ENCODE measurements at regions of chr1 and their contacts with region 1.

Region 1: DNA sequence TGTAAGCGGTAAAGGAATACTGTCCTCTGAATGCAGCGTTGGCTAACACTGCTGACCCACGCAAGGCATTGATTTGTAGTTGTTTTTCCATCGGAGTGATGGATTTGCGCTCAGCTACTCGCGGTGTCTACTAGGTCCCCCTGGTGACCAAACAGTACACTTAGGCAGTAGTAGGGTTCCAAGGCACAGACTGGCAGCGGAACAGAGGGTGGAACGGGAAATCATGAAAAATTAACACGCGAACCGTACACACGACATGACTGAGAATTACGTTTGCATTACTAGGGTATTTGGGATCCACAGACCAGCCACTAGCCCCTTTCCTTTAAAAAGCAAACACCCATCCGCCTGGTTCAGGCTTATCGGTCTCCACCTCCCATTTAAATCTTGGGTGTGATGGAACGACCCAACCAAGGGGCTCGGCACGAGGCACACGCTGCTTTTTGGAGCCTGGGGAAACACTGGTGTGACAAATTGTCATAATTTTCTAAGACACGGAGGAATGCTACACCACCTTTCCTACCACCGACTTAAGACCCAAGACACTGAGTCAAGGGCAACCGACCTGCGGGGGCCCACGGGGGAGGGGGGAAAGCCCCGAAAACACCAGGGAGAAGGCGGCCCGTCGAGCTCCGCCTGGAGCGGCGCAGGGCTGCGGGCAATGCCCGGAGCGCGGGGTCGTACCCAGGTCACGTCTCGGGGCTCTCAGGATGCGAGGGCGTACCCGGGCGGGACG is 699 bp downstream of the DIPK1A start:
- DNase-seq: peak; percentile 79
- ATAC-seq: peak; percentile 77
- H3K4me3 ChIP-seq: peak overlapping the region; percentile 85
- H3K27ac ChIP-seq: no peak overlapping the region
- H3K4me1 ChIP-seq: peaks cover 10% of the 10 kb centered on the region
- H3K27me3 ChIP-seq: no peaks in the 10 kb centered on the region
- CTCF ChIP-seq: peak; percentile 87

Region 2: GRCh38 chr1:92916902-92917301 is 43.7 kb before region 1 on chr1:
- CTCF ChIA-PET with region 1: no interaction called
- POLR2A ChIA-PET with region 1: no interaction called
- intact Hi-C with region 1: loop called (anchors 1 kb)
- DNase-seq: peak; percentile 81
- ATAC-seq: peak; percentile 89
- H3K4me3 ChIP-seq: no peak overlapping the region
- H3K27ac ChIP-seq: peak overlapping the region; percentile 38
- H3K4me1 ChIP-seq: peaks cover 27% of the 10 kb centered on the region
- H3K27me3 ChIP-seq: no peaks in the 10 kb centered on the region
- CTCF ChIP-seq: no peak

Region 3: DNA sequence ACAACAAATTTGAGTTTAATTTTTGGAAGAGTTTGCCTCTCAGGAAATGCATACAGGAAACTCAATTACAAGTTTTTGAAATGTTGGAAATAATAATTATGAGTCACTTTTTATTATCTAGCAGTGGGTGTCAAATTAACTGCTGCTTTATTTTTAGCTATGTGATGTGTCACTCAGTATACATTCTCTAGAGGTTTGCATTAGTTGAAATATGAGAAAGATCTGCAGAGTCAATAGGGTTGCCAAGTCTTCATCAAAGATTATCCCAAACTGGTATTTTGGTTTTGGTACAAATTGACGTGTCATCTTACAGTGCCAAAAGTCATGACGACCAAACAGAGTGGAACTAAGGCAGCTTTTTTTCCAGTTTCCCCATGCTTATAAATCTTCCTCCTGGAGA is 55.0 kb after region 1 on chr1:
- CTCF ChIA-PET with region 1: interaction called, 11 read pairs
- POLR2A ChIA-PET with region 1: no interaction called
- intact Hi-C with region 1: no loop called
- DNase-seq: peak; percentile 93
- ATAC-seq: peak; percentile 91
- H3K4me3 ChIP-seq: peak overlapping the region; percentile 41
- H3K27ac ChIP-seq: peak overlapping the region; percentile 92
- H3K4me1 ChIP-seq: peaks cover 47% of the 10 kb centered on the region
- H3K27me3 ChIP-seq: no peaks in the 10 kb centered on the region
- CTCF ChIP-seq: no peak

Region 4: DNA sequence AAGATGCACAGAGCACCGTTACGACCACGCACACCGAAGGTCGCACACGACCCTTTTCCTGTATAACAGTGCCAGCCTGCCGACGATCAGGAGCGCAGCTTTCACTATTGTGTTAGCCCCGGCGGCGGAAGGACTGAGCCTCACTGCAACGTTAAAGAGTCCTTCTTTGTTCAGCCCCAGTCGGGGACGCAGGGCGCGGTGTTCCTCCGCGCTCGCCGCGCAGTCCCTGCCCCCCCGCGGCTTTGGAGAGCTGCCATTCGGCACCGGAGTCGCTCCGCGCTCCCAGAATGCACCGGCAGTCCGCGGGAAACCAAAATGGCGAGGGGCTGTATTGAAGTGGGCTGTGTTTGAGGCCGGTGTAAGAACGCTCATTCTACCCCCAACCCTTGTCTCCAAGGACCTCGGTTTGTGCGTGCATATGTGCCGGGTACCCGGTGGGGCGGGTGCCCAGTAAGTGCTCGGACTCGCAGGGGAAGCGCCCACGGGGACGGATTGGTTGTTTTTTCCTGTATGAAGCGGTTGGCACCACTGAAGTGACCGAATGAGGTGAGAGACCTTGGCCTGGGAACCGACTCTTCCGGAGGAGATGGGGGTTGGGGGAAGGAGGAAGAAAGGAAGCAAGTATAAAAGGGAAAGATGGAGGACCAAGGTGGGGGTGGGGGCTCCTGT is 118.6 kb after region 1 on chr1 and contains the start of gene MTF2:
- CTCF ChIA-PET with region 1: no interaction called
- POLR2A ChIA-PET with region 1: interaction called, 14 read pairs
- intact Hi-C with region 1: no loop called
- DNase-seq: peak; percentile 96
- ATAC-seq: peak; percentile 78
- H3K4me3 ChIP-seq: peak within 1 kb of the TSS; percentile 89
- H3K27ac ChIP-seq: peak within 1 kb of the TSS; percentile 40
- H3K4me1 ChIP-seq: peaks cover 12% of the 10 kb centered on the region; the same call in 1 of the 2 replicates
- H3K27me3 ChIP-seq: no peaks in the 10 kb centered on the region
- CTCF ChIP-seq: no peak
- total RNA-seq, gene MTF2: 15.3 and 25.3 TPM in 2 replicates

Region 5: GRCh38 chr1:93878889-93879586 is 918.5 kb after region 1 on chr1 and contains the start of gene DNTTIP2:
- CTCF ChIA-PET with region 1: no interaction called
- POLR2A ChIA-PET with region 1: no interaction called
- intact Hi-C with region 1: no loop called
- DNase-seq: peak; percentile 95
- ATAC-seq: peak; percentile 90
- H3K4me3 ChIP-seq: peak within 1 kb of the TSS; percentile 90
- H3K27ac ChIP-seq: peak within 1 kb of the TSS; percentile 91
- H3K4me1 ChIP-seq: peaks cover 20% of the 10 kb centered on the region
- H3K27me3 ChIP-seq: no peaks in the 10 kb centered on the region
- CTCF ChIP-seq: no peak
- total RNA-seq, gene DNTTIP2: 47.8 and 47.9 TPM in 2 replicates

Measured in PC-3 (cell line).